Endothelial cell of umbilical vein (primary cell): ENCODE measurements at regions of chr1 and their contacts with region 1.

Region 1: GRCh38 chr1:156212833-156213643 is at the start of gene PMF1:
- DNase-seq: peak; percentile 98
- H3K4me3 ChIP-seq: peak within 1 kb of the TSS; percentile 44 to 80 (median 79)
- H3K27ac ChIP-seq: peak within 1 kb of the TSS; percentile 97
- H3K4me1 ChIP-seq: peaks cover 15% of the 10 kb centered on the region
- H3K27me3 ChIP-seq: no peaks in the 10 kb centered on the region
- CTCF ChIP-seq: no peak
- POLR2A ChIP-seq: peak; percentile 90
- total RNA-seq, gene PMF1: 58.4 and 61.6 TPM in 2 replicates

Region 2: DNA sequence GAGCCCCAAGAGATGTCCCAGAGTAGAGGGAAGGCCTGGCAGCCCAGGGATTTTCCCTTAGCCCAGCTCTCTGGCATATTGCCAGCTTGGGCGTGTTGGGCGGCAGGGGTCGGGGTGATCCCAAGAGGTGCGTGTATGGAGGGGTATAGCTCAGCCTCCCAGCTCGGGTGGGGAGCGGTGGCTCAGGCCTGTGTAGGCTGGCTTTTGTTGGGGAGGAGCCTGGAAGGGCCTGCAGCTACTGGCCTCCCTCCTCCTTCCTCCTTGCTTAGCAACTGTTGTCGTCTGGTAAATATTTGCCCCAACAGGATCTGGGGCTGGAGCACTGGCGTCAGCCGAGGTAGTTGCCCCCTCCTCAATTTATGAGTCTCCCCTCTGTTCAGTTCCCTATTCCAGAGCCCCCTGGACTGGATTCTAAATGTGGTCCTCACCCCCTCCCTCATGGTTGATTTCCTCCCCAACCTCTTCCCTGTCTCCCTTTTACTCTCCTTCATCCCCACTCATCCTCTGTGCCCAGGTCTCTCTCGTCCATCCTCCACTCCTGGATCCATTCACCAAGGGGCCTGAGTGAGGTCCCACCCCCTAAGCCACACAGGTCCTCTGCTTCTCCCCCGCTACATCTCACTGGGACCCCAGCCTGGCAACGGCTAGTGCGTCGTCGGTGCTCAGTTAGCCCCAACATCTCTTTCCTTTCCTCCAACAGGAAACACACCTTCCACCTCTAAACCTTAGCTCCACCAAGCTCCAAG is 108.8 kb before region 1 on chr1:
- CTCF ChIA-PET with region 1: no interaction called
- POLR2A ChIA-PET with region 1: no interaction called
- dilution Hi-C with region 1: no loop called
- intact Hi-C with region 1: loop called (anchors 5 kb)
- DNase-seq: peak; percentile 91
- H3K4me3 ChIP-seq: no peak overlapping the region
- H3K27ac ChIP-seq: peak overlapping the region; percentile 97
- H3K4me1 ChIP-seq: peaks cover 57% of the 10 kb centered on the region
- H3K27me3 ChIP-seq: no peaks in the 10 kb centered on the region
- CTCF ChIP-seq: no peak
- POLR2A ChIP-seq: no peak

Region 3: DNA sequence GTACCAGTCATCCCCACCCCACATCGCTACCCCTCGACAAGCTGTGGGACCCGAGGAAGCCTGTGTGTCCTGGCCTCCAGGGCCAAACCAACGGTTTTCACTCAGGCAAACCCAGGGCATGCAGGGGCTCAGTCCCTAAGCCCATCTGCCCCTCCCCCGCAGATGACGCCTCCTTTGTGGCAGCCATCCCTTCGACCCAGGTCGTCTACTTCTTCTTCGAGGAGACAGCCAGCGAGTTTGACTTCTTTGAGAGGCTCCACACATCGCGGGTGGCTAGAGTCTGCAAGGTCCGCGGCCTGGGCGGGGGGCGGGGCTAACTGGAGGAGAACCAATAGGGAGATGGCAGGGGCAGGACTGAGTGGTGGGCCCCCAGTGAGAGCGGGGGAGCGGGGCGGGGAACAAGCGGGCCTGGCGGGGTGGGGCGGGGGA is 52.3 kb before region 1 on chr1:
- CTCF ChIA-PET with region 1: interaction called, 5 read pairs
- POLR2A ChIA-PET with region 1: interaction called, 7 read pairs
- dilution Hi-C with region 1: no loop called
- intact Hi-C with region 1: loop called (anchors 1 kb)
- DNase-seq: peak; percentile 78
- H3K4me3 ChIP-seq: no peak overlapping the region
- H3K27ac ChIP-seq: peak overlapping the region; percentile 9
- H3K4me1 ChIP-seq: peaks cover 20% of the 10 kb centered on the region
- H3K27me3 ChIP-seq: no peaks in the 10 kb centered on the region
- CTCF ChIP-seq: no peak
- POLR2A ChIP-seq: no peak

Region 4: DNA sequence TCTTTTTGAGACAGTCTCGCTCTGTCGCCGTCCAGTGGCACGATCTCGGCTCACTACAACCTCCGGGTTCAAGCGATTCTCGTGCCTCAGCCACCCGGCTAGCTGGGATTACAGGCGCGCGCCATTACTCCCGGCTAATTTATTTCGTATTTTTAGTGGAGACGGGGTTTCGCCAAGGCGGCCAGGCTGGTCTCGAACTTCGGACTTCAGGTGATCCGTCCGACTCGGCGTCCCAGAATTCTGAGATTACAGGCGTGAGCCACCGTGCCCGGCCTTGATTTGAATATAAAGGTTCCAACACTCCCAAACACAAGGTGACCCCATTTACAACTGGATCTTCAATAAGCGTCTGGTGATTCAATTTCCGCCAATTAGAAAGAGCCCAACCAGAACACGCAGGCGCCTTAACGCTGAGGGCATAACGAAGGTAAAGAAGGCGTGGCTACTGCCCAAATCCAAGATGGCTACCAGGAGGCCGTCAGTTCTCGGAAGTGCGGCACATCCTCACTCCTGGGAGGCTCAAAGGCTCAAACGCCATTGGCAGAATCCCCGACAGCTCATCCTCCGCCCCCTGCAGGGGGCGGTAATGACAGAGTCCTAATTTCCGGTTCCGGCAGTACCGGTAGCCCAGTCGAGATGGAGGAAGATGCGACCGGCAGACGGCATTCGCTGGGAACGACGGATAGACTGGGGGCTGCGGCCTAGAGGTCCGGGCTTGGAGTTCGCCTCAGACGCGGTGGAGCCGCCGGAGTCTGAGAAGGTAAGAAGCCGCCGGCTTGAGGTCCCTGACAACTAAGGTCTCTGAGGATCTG is 19.3 kb before region 1 on chr1 and contains the start of gene SLC25A44:
- CTCF ChIA-PET with region 1: interaction called, 13 read pairs
- POLR2A ChIA-PET with region 1: interaction called, 10 read pairs
- dilution Hi-C with region 1: no loop called
- intact Hi-C with region 1: loop called (anchors 1 kb)
- DNase-seq: peak; percentile 100
- H3K4me3 ChIP-seq: peak within 1 kb of the TSS; percentile 33 to 86 (median 64)
- H3K27ac ChIP-seq: peak within 1 kb of the TSS; percentile 86
- H3K4me1 ChIP-seq: peaks cover 9% of the 10 kb centered on the region
- H3K27me3 ChIP-seq: no peaks in the 10 kb centered on the region
- CTCF ChIP-seq: peak; percentile 27 to 53
- POLR2A ChIP-seq: peak; percentile 85
- total RNA-seq, gene SLC25A44: 24.0 and 26.3 TPM in 2 replicates